Activated B cell treated with CpG ODN at 0.5 μM for 24 hours (primary cell): ENCODE measurements at regions of chr3 and their contacts with region 1.

Region 1: DNA sequence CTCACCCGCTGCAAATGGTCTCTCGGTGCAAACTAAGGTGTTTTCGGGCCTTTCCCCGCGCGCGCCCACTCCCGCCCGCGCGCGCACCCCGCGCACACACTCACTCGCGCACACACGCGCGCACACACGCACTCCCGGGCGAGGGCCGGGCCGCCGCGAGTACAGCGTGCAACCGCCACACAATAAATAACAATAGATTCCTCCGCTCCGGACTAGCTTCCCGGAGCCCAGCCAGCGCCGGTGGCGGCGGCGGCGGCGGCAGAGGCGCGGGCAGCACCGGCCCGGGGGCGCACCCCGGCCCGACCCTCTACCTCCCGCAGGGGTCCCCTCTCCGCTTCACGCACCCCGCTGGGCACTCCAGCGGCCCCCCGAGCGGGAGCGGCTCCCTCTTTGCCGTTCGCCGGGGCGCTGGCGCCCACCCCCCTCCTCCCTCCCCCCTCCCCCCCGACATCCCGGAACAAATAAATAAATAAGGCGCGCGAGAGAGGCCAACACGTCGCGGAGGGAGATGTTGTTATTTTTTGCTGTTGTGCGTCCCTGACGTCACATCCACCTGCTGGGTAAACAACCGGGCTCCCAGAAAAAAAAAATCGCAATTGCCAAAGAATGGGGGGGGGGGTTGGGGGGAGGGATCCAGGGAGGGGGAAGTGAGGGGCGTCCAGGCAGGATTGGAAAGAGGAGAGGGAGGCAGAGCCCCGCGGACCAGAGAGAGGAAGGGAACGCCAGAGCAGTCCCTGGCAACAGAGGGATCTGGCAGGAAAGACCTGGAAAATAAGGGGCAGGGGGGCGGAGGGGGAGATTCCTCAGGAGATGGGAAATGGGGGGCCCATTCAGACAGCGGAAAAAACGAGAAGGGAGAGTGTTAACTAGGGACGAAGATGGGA is at the start of gene FOXP1:
- DNase-seq: peak; percentile 59
- ATAC-seq: peak; percentile 30
- H3K4me3 Mint-ChIP-seq: peak within 1 kb of the TSS; percentile 92
- H3K27ac Mint-ChIP-seq: peak within 1 kb of the TSS; percentile 93
- H3K4me1 Mint-ChIP-seq: peaks cover 53% of the 10 kb centered on the region
- H3K27me3 Mint-ChIP-seq: no peaks in the 10 kb centered on the region
- CTCF ChIP-seq: no peak
- total RNA-seq, gene FOXP1: 491 and 563 TPM in 2 replicates

Region 2: DNA sequence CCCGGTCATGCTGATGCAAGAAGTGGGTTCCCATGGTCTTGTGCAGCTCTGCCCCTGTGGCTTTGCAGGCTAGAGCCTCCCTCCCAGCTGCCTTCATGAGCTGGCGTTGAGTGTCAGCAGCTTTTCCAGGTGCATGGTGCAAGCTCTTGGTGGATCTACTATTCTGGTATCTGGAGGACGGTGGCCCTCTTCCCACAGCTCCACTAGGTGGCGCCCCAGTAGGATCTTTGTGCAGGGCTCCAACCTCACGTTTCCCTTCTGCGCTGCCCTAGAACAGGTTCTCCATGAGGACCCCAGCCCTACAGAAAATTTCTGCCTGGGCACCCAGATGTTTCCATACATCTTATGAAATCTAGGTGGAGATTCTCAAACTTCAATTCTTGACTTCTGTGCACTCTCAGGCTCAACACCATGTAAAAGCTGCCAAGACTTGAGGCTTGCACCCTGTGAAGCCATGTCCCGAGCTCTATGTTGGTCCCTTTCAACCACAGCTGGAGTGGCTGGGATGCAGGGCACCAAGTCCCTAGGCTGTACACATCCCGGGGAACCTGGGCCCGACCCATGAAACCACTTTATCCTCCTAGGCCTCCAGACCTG is 1033.0 kb before region 1 on chr3:
- CTCF ChIA-PET with region 1: interaction called, 11 read pairs
- POLR2A ChIA-PET with region 1: interaction called, 3 read pairs
- intact Hi-C with region 1: loop called (anchors 1 kb)
- DNase-seq: peak; percentile 61
- ATAC-seq: peak; percentile 75
- H3K4me3 Mint-ChIP-seq: no peak overlapping the region
- H3K27ac Mint-ChIP-seq: no peak overlapping the region
- H3K4me1 Mint-ChIP-seq: no peaks in the 10 kb centered on the region
- H3K27me3 Mint-ChIP-seq: peaks cover 4% of the 10 kb centered on the region
- CTCF ChIP-seq: no peak

Region 3: GRCh38 chr3:71064288-71064955 is 519.4 kb before region 1 on chr3:
- CTCF ChIA-PET with region 1: interaction called, 4 read pairs
- POLR2A ChIA-PET with region 1: interaction called, 103 read pairs
- intact Hi-C with region 1: loop called (anchors 1 kb)
- DNase-seq: peak; percentile 64
- ATAC-seq: peak; percentile 33
- H3K4me3 Mint-ChIP-seq: no peak overlapping the region
- H3K27ac Mint-ChIP-seq: no peak overlapping the region
- H3K4me1 Mint-ChIP-seq: peaks cover 67% of the 10 kb centered on the region
- H3K27me3 Mint-ChIP-seq: no peaks in the 10 kb centered on the region
- CTCF ChIP-seq: no peak

Region 4: DNA sequence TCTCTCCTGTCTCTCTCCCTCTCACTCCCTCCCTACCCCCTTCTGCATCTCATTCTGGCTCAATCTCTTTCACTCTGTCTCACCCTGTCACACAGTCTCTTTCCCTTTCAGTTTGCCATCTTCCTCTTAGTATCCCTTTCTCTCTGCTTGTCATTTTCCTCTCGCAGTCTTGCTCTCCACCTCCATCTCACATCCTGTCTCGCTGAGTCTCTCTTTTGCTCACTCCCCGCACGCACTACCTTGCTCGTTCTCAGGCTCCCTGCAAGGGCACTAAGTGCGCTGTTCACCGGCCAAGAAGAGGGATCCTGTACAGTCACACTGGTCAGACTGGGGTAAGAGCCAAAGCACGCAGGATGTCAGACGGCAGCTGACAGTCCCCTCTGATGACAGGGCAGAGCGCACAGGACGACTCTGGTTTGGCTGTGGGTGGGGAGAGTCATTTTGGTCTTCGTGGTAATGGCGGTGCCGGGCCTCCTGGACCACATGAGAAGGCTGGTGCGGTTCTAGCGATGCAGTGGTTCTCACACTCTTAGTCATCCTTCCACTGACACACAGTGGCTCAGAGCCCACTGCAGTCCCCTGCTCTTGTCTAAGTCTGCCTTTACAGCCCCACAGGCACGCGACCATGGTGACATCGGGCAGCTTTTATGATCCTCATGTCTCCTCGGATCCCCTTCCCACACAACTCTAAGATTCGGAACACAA is 357.1 kb before region 1 on chr3:
- CTCF ChIA-PET with region 1: no interaction called
- POLR2A ChIA-PET with region 1: interaction called, 6 read pairs
- intact Hi-C with region 1: loop called (anchors 2 kb)
- DNase-seq: peak; percentile 50
- ATAC-seq: peak; percentile 76
- H3K4me3 Mint-ChIP-seq: peak overlapping the region; percentile 89
- H3K27ac Mint-ChIP-seq: peak overlapping the region; percentile 97
- H3K4me1 Mint-ChIP-seq: peaks cover 76% of the 10 kb centered on the region
- H3K27me3 Mint-ChIP-seq: no peaks in the 10 kb centered on the region
- CTCF ChIP-seq: no peak

Region 5: DNA sequence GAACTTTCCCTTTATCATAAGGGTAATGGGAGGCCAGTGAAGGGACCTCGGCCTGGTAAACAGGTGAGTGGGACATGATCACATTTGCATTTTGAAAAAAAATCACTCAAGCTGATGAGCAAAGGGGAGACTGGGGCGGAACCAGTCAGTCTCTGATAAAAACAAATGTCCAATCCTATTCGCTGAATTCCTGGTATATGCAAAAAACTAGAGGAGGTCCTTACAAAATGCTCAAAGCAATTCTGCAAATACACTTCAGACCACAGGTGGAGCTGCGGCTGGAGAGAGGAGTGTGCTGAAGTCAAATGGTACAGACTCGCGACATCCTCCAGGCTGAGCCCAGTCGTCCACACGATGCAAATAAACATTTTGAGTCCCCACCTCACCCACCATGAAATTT is 166.9 kb before region 1 on chr3:
- CTCF ChIA-PET with region 1: no interaction called
- POLR2A ChIA-PET with region 1: interaction called, 14 read pairs
- intact Hi-C with region 1: no loop called
- DNase-seq: no peak
- ATAC-seq: peak; percentile 54
- H3K4me3 Mint-ChIP-seq: peak overlapping the region; percentile 42
- H3K27ac Mint-ChIP-seq: peak overlapping the region; percentile 81
- H3K4me1 Mint-ChIP-seq: peaks cover 82% of the 10 kb centered on the region
- H3K27me3 Mint-ChIP-seq: no peaks in the 10 kb centered on the region
- CTCF ChIP-seq: no peak

Region 6: DNA sequence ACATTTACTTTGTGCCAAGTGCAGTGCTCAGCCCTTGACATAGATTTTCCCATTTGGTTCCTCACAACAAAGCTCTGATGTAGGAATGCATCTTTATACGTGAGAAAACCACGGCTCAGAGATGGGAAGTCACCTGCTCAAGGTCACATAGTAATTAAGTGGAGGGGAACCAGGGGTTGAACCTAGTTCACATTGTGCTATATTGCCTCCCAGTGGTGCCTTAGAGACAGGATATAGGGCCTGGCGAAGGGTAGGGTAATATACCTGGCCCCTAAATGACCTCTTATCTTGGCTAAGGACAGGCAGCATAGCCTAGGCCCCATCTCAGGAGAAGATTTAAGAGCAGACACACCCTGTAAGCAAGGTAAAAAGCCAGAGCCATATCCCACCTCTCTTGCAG is 71.8 kb before region 1 on chr3:
- CTCF ChIA-PET with region 1: interaction called, 4 read pairs
- POLR2A ChIA-PET with region 1: interaction called, 11 read pairs
- intact Hi-C with region 1: loop called (anchors 2 kb)
- DNase-seq: no peak
- ATAC-seq: peak; percentile 97
- H3K4me3 Mint-ChIP-seq: peak overlapping the region; percentile 5
- H3K27ac Mint-ChIP-seq: no peak overlapping the region
- H3K4me1 Mint-ChIP-seq: peaks cover 22% of the 10 kb centered on the region
- H3K27me3 Mint-ChIP-seq: no peaks in the 10 kb centered on the region
- CTCF ChIP-seq: no peak